Activated T-helper 2 cell treated with anti-CD3 and anti-CD28 coated beads, Interferon-gamma antibody, Interleukin-2, Interleukin-4, amounts not matched to agents 10 μg/mL and 5 μg/mL and 100 μg/mL, durations not matched to agents 14 hours and 24 hours and 36 hours (primary cell): ENCODE measurements at regions of chr5 and their contacts with region 1.

Region 1: DNA sequence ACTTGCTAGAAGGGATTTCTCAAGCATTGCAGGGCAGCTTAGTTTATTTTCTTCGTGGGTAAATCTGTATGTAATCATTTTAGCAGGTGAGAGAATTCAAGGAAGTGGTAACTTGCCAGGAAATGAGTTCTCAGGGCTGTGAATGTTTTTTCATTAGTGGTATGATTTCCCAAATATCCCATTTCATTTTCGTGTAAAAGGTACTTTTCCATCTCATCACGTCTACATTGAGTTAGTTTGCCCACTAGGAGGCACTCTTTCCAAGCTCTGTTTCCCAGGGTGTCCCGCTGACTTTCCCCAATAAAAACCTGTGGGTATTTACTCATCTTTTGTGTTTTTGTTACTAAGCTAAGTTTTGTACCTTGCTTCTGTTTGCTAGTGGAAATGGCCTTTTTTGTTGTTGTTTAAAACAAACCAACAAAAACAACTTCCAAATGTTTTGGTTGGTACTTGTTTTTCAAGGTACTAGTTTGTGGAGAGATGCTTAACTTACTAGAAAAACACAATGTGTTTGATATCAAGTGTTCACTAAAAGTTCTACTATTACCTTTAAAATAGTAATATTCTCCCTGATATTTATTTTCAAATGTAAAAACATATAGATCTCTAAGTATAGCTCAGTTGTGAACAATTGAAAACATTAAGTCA is 373.6 kb downstream of the ADGRV1 start:
- DNase-seq: no peak
- H3K4me3 Mint-ChIP-seq: no peak overlapping the region
- H3K27ac Mint-ChIP-seq: no peak overlapping the region
- H3K4me1 Mint-ChIP-seq: peaks cover 21% of the 10 kb centered on the region
- H3K27me3 Mint-ChIP-seq: peaks cover 4% of the 10 kb centered on the region

Region 2: GRCh38 chr5:90873033-90873517 is 59.1 kb before region 1 on chr5:
- intact Hi-C with region 1: loop called (anchors 2 kb)
- DNase-seq: no peak
- H3K4me3 Mint-ChIP-seq: no peak overlapping the region
- H3K27ac Mint-ChIP-seq: peak overlapping the region; percentile 18
- H3K4me1 Mint-ChIP-seq: peaks cover 39% of the 10 kb centered on the region
- H3K27me3 Mint-ChIP-seq: peaks cover 35% of the 10 kb centered on the region

Region 3: GRCh38 chr5:91024727-91025126 is 92.6 kb after region 1 on chr5:
- intact Hi-C with region 1: loop called (anchors 5 kb)
- DNase-seq: no peak
- H3K4me3 Mint-ChIP-seq: no peak overlapping the region
- H3K27ac Mint-ChIP-seq: no peak overlapping the region
- H3K4me1 Mint-ChIP-seq: no peaks in the 10 kb centered on the region
- H3K27me3 Mint-ChIP-seq: peaks cover 11% of the 10 kb centered on the region

Region 4: GRCh38 chr5:91059409-91059808 is 127.2 kb after region 1 on chr5:
- intact Hi-C with region 1: loop called (anchors 10 kb)
- DNase-seq: no peak
- H3K4me3 Mint-ChIP-seq: no peak overlapping the region
- H3K27ac Mint-ChIP-seq: no peak overlapping the region
- H3K4me1 Mint-ChIP-seq: peaks cover 16% of the 10 kb centered on the region
- H3K27me3 Mint-ChIP-seq: peaks cover 26% of the 10 kb centered on the region

Region 5: GRCh38 chr5:91090995-91091394 is 158.8 kb after region 1 on chr5:
- intact Hi-C with region 1: loop called (anchors 5 kb)
- DNase-seq: no peak
- H3K4me3 Mint-ChIP-seq: no peak overlapping the region
- H3K27ac Mint-ChIP-seq: no peak overlapping the region
- H3K4me1 Mint-ChIP-seq: peaks cover 8% of the 10 kb centered on the region
- H3K27me3 Mint-ChIP-seq: peaks cover 13% of the 10 kb centered on the region

Region 6: DNA sequence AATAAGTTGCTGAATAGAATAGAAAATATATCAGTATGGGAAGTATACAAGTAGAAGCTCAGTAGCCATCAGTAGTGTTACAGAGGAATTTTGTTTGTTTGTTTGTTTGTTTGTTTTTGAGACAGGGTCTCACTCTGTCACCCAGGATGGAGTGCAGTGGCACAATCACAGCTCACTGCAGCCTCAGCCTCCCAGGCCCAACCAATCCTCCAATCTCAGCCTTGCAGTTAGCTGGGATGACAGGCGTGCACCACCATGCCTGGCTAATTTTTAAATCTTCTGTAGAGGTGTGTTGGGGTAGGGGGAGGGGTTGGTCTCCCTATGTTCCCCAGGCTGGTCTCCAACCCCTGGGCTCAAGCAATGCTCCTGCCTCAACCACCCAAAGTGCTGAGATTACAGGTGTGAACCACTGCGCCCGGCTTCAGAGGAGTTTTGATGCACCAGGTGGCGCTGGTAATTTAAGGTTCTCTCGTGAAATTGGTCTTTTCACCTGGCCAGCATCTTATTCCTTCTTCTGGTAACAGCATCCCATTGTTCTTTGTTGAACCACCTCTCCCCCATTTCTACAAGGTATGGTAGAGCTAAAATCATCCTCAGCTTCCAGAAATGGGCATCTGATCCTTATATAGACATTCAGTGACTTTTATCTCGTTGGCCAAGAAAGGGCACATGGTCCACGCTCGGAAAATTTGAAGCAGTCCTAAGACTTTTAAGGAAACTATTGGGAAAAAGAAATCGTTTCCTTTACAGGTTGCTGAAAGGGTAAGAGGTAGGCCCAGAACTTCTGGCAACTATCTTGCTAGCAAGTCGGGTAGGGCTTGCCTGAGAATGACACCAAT is 293.9 kb after region 1 on chr5:
- intact Hi-C with region 1: loop called (anchors 5 kb)
- DNase-seq: peak; percentile 26
- H3K4me3 Mint-ChIP-seq: no peak overlapping the region
- H3K27ac Mint-ChIP-seq: no peak overlapping the region
- H3K4me1 Mint-ChIP-seq: peaks cover 4% of the 10 kb centered on the region
- H3K27me3 Mint-ChIP-seq: peaks cover 18% of the 10 kb centered on the region

Region 7: GRCh38 chr5:91257301-91257700 is 325.1 kb after region 1 on chr5:
- intact Hi-C with region 1: no loop called
- DNase-seq: no peak
- H3K4me3 Mint-ChIP-seq: no peak overlapping the region
- H3K27ac Mint-ChIP-seq: no peak overlapping the region
- H3K4me1 Mint-ChIP-seq: no peaks in the 10 kb centered on the region
- H3K27me3 Mint-ChIP-seq: peaks cover 20% of the 10 kb centered on the region